PC-9 (cell line): ENCODE measurements at regions of chr3 and their contacts with region 1.

Region 1: GRCh38 chr3:151838583-151839312 is 24.8 kb downstream of the AADAC start:
- DNase-seq: peak; percentile 42 to 60
- H3K4me3 ChIP-seq: no peak overlapping the region
- H3K27ac ChIP-seq: no peak overlapping the region
- H3K4me1 ChIP-seq: peaks cover 16% of the 10 kb centered on the region
- H3K27me3 ChIP-seq: no peaks in the 10 kb centered on the region
- CTCF ChIP-seq: peak; percentile 92

Region 2: DNA sequence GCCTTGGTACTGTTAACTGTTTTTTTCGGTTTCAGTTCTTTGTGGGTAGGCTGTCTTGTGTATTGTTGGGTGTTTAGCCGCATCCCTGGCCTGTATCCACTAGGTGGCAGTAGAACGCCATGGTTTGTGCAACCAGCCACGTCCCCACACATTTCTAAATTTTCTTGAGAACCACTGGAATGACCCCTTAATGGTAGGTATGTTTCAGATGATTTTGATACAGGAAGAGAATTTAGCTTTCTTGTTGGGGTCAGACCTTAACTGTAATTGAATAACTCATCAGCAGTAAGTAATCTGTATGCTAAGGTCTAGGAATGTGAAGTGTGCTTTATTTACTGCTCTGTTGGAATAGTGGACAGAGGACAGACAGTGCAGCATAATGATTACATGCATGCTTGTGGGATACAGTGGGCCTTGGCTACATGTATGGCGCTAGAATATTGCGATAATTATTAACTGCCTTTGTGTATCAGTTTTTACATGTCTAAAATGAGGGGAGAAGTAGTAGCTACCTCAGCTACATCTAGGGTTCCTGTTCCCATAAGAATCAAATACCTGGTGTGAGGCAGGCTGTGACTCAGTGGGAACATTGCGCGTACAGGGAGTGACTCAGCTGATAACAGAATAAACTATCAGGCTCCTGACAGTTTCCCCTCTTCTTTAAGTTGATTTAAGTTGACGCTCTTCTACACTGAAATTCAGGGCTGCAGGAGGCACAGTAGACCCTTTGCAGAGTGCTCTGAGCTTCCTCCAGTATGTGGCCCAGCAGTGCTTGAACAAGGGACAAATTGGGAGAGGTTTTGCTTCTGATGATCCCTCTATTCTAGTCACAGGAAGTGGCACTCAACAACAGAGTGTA is 610.7 kb before region 1 on chr3:
- CTCF ChIA-PET with region 1: no interaction called
- POLR2A ChIA-PET with region 1: no interaction called
- intact Hi-C with region 1: loop called (anchors 1 kb)
- DNase-seq: peak; percentile 68 to 75
- H3K4me3 ChIP-seq: no peak overlapping the region
- H3K27ac ChIP-seq: peak overlapping the region; percentile 40
- H3K4me1 ChIP-seq: peaks cover 28% of the 10 kb centered on the region
- H3K27me3 ChIP-seq: no peaks in the 10 kb centered on the region
- CTCF ChIP-seq: peak; percentile 98

Region 3: DNA sequence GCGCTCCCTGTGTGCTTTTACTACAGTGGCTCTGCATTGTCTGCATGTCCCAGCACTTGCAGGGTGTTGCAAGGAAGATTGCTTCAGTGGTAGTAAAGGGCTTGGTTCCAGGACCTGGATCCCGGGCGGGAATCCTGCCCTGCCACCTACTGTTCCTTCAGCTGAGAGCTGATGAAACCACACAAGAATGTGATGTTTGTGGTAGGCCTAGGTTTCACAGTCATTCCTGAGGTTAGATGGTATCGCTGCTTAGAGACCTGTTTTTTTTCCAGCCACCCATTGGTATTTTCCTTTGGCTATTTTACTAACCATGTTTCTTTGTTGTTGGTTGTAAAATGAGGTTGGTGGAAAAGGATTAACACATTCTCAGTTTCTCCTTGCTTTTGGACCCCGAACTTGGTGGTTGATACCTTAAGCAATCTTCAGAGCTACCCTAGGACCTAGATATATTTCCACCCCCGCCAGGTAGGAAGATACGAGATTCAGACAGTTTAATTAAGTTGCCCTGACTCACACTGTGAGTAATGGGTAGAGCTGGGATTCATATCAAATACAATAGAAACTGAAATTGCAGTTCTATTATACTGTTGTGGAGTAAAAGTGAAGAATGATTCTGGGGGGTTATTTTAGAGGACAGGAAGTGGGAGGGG is 533.5 kb before region 1 on chr3:
- CTCF ChIA-PET with region 1: no interaction called
- POLR2A ChIA-PET with region 1: no interaction called
- intact Hi-C with region 1: loop called (anchors 5 kb)
- DNase-seq: peak; percentile 95 to 99
- H3K4me3 ChIP-seq: peak overlapping the region; percentile 51; the same call in 1 of the 2 replicates
- H3K27ac ChIP-seq: peak overlapping the region; percentile 96
- H3K4me1 ChIP-seq: peaks cover 77% of the 10 kb centered on the region
- H3K27me3 ChIP-seq: no peaks in the 10 kb centered on the region
- CTCF ChIP-seq: no peak

Region 4: DNA sequence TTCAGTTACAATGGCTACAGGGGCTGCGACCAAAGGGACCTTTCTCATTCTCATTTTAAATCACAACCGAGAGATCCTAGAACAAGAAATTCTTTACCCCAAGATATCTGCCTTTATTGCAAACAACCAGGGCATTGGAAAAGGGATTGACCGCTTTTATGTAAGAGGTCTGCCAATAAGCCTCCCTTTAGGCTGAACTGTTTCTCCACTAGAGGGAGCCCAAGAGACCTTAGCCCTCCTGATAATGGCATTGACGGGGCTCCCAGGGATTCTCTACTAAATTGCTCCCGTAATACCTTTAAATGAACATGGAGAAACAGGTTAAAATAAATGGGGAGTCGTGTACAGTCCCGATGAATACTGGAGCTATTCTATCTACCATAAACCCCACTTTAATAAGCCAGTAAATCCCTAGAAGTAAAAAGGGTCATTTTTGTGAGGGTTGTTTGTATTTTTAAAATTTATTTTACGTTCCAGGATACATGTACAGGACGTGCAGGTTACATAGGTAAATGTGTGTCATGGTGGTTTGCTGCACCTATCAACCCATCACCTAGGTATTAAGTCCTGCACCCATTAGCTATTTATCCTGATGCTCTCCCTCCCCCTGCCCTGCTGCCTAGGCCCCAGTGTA is 370.3 kb before region 1 on chr3:
- CTCF ChIA-PET with region 1: interaction called, 3 read pairs
- POLR2A ChIA-PET with region 1: no interaction called
- intact Hi-C with region 1: loop called (anchors 1 kb)
- DNase-seq: peak; percentile 40 to 43
- H3K4me3 ChIP-seq: no peak overlapping the region
- H3K27ac ChIP-seq: no peak overlapping the region
- H3K4me1 ChIP-seq: no peaks in the 10 kb centered on the region
- H3K27me3 ChIP-seq: no peaks in the 10 kb centered on the region
- CTCF ChIP-seq: peak; percentile 96

Region 5: DNA sequence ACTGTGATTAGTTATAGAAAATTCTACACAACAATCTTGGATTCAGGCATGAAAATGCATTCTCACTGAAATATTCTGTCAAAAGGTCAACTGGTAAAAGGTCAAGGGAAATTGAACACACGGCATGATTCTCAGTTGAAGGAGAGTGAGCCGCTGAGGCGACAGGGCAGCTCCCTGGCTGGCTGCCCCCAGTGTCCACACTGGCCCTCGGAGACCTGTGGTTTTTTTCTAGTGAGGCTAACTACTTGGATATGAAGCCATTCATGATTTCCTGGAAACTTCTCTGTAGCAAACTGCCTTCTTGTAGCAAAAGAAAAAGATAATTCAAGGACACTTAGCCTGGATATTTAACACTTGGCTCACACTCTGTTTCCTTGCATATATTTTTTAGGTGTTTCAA is 67.8 kb before region 1 on chr3:
- CTCF ChIA-PET with region 1: no interaction called
- POLR2A ChIA-PET with region 1: interaction called, 4 read pairs
- intact Hi-C with region 1: loop called (anchors 2 kb)
- DNase-seq: peak in 1 of 2 experiments; percentile 45
- H3K4me3 ChIP-seq: no peak overlapping the region
- H3K27ac ChIP-seq: no peak overlapping the region
- H3K4me1 ChIP-seq: peaks cover 13% of the 10 kb centered on the region
- H3K27me3 ChIP-seq: no peaks in the 10 kb centered on the region
- CTCF ChIP-seq: no peak

Region 6: GRCh38 chr3:152444029-152444641 is 605.4 kb after region 1 on chr3:
- CTCF ChIA-PET with region 1: no interaction called
- POLR2A ChIA-PET with region 1: no interaction called
- intact Hi-C with region 1: loop called (anchors 10 kb)
- DNase-seq: peak in 1 of 2 experiments; percentile 63
- H3K4me3 ChIP-seq: no peak overlapping the region
- H3K27ac ChIP-seq: peak overlapping the region; percentile 10; the same call in 1 of the 2 replicates
- H3K4me1 ChIP-seq: no peaks in the 10 kb centered on the region
- H3K27me3 ChIP-seq: no peaks in the 10 kb centered on the region
- CTCF ChIP-seq: peak; percentile 87